ENCODE measurements at regions of chr3 and their contacts with region 1.

Region 1: DNA sequence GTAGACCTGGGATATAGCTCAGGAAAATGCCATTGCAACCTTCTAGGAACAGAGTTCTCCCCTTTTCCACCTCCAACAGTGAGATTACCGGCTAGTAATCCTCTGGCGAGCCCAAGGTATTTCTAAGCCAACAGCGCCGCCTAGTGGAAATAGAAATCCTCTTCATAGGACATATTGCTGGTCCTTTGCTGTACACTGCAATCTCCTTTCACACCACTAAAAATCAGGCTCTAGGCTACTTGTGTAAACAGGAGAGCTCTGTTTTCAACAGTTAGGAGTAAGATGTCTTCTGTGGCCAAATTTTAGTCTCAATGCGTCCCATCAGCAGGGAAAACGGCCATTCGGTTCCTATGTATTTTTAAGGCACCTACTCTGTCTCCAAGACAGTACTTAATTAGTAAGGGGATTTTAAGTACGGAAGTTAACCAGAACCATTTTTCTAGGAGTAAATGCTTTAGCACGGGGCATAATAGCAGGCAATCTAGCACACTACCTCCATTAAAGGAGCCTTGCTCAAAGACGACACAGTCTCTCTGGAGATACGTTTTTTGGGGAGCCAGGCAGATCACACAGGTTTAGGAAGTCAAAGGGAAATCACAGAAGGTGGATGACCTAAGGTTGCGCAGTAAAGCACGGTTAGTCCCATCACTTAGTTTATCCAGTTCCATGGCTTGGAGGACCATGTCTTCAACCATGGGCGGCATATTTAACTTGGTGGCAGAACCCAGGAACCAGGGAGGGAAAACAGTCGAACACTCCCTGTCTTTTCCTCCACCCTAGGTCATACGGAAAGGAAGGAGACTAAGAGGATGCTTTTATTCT is 43.8 kb downstream of the NCEH1 start:
- DNase-seq: no peak
- ATAC-seq: peak; percentile 100
- H3K4me3 ChIP-seq: no peak overlapping the region
- H3K27ac ChIP-seq: no peak overlapping the region
- H3K4me1 ChIP-seq: no peaks in the 10 kb centered on the region
- H3K27me3 ChIP-seq: no peaks in the 10 kb centered on the region
- CTCF ChIP-seq: peak; percentile 86 to 96 (median 95)
- EP300 ChIP-seq: no peak
- POLR2A ChIP-seq: no peak
- RAD21 ChIP-seq: peak; percentile 95

Region 2: GRCh38 chr3:172341482-172342059 is 325.5 kb before region 1 on chr3:
- CTCF ChIA-PET with region 1: interaction called, 14 read pairs
- POLR2A ChIA-PET with region 1: no interaction called
- RAD21 ChIA-PET with region 1: no interaction called
- SMC1A ChIA-PET with region 1: interaction called, 4 read pairs
- in situ Hi-C with region 1: loop called (anchors 25 kb)
- intact Hi-C with region 1: no loop called
- DNase-seq: peak; percentile 24
- ATAC-seq: peak; percentile 92
- H3K4me3 ChIP-seq: no peak overlapping the region
- H3K27ac ChIP-seq: no peak overlapping the region
- H3K4me1 ChIP-seq: no peaks in the 10 kb centered on the region
- H3K27me3 ChIP-seq: no peaks in the 10 kb centered on the region
- CTCF ChIP-seq: peak; percentile 53 to 67 (median 59); a peak in 5 of 6 replicates
- EP300 ChIP-seq: no peak
- POLR2A ChIP-seq: no peak
- RAD21 ChIP-seq: peak; percentile 73

Region 3: GRCh38 chr3:172476347-172476746 is 190.7 kb before region 1 on chr3:
- CTCF ChIA-PET with region 1: interaction called, 4 read pairs
- POLR2A ChIA-PET with region 1: no interaction called
- RAD21 ChIA-PET with region 1: interaction called, 3 read pairs
- SMC1A ChIA-PET with region 1: interaction called, 8 read pairs
- in situ Hi-C with region 1: no loop called
- intact Hi-C with region 1: loop called (anchors 5 kb)
- DNase-seq: no peak
- ATAC-seq: no peak
- H3K4me3 ChIP-seq: no peak overlapping the region
- H3K27ac ChIP-seq: no peak overlapping the region
- H3K4me1 ChIP-seq: peaks cover 9% of the 10 kb centered on the region; the same call in 1 of the 2 replicates
- H3K27me3 ChIP-seq: no peaks in the 10 kb centered on the region
- CTCF ChIP-seq: no peak
- EP300 ChIP-seq: no peak
- POLR2A ChIP-seq: no peak
- RAD21 ChIP-seq: no peak

Region 4: DNA sequence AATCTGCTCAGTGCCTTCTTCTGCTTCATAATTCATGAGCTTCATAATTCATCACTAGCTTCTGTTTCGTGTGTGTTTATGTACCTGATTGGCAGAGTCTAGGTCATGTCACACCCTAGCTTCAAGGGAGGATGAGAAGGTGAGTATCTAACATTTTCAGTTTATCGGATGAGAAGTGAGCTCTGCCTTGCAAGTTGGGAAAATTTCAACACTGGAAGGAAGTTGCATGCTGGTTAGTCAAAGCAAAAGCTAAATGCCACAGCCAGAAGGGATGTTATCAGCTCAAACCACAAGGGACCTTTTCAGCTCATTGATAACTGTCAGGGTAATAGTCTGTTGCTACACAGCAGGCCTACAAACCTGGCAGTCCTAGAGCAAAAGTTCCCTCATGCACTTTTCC is 136.5 kb before region 1 on chr3:
- CTCF ChIA-PET with region 1: no interaction called
- POLR2A ChIA-PET with region 1: no interaction called
- RAD21 ChIA-PET with region 1: no interaction called
- SMC1A ChIA-PET with region 1: no interaction called
- in situ Hi-C with region 1: no loop called
- intact Hi-C with region 1: no loop called
- DNase-seq: no peak
- ATAC-seq: peak; percentile 70
- H3K4me3 ChIP-seq: no peak overlapping the region
- H3K27ac ChIP-seq: no peak overlapping the region
- H3K4me1 ChIP-seq: no peaks in the 10 kb centered on the region
- H3K27me3 ChIP-seq: no peaks in the 10 kb centered on the region
- CTCF ChIP-seq: no peak
- EP300 ChIP-seq: no peak
- POLR2A ChIP-seq: no peak
- RAD21 ChIP-seq: no peak

Region 5: DNA sequence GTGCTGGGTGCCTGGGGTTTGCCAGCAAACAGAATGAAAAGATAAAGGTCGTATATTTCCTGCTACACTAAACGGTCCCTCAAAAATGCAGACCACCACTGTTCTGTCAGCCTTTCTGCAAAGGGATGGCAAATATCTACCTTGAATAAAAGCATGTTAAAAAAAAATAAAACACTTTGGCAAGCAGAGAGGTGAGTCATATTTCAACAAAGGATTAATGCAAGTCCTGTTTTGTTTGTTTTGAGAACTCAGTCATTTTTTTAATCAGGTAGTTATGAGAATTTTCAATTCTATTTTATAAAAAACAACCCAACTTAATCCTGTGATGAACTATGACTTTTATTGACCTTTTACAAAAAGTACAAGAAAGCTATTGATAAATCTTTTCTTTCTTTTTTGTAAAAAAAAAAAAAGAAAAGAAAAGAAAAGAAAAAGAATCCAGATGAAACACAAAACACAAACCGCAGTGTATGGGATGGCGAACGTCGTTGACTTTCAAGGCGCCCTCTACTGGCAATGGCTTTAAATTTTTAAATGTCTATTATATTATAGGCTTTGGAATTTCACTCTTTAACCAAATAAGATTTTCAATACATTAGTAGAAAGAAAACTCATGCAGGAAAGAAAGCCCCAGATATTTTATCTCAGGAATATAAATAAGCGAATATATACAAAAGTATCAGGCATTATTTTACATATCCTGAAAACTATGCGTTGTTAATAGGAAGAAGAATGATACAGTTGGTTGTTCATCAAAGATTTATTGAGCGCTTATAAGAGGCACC is 44.0 kb before region 1 on chr3:
- CTCF ChIA-PET with region 1: interaction called, 10 read pairs
- POLR2A ChIA-PET with region 1: no interaction called
- RAD21 ChIA-PET with region 1: no interaction called
- SMC1A ChIA-PET with region 1: interaction called, 4 read pairs
- in situ Hi-C with region 1: no loop called
- intact Hi-C with region 1: no loop called
- DNase-seq: no peak
- ATAC-seq: peak; percentile 69
- H3K4me3 ChIP-seq: no peak overlapping the region
- H3K27ac ChIP-seq: no peak overlapping the region
- H3K4me1 ChIP-seq: no peaks in the 10 kb centered on the region
- H3K27me3 ChIP-seq: no peaks in the 10 kb centered on the region
- CTCF ChIP-seq: peak; percentile 33 to 63 (median 49)
- EP300 ChIP-seq: no peak
- POLR2A ChIP-seq: no peak
- RAD21 ChIP-seq: peak; percentile 46

Region 6: GRCh38 chr3:172640751-172641150 is 26.3 kb before region 1 on chr3:
- CTCF ChIA-PET with region 1: interaction called, 12 read pairs
- POLR2A ChIA-PET with region 1: no interaction called
- RAD21 ChIA-PET with region 1: no interaction called
- SMC1A ChIA-PET with region 1: interaction called, 3 read pairs
- in situ Hi-C with region 1: no loop called
- intact Hi-C with region 1: no loop called
- DNase-seq: no peak
- ATAC-seq: no peak
- H3K4me3 ChIP-seq: no peak overlapping the region
- H3K27ac ChIP-seq: no peak overlapping the region
- H3K4me1 ChIP-seq: peaks cover 1% of the 10 kb centered on the region
- H3K27me3 ChIP-seq: no peaks in the 10 kb centered on the region
- CTCF ChIP-seq: no peak
- EP300 ChIP-seq: no peak
- POLR2A ChIP-seq: no peak
- RAD21 ChIP-seq: no peak